ENCODE measurements at regions of chr9 and their contacts with region 1.

Region 1: GRCh38 chr9:96449845-96450612 is at the start of gene HABP4:
- DNase-seq: peak; percentile 97 to 99 (median 98)
- ATAC-seq: peak; percentile 99 to 100 (median 99)
- H3K4me3 ChIP-seq: peak within 1 kb of the TSS; percentile 53 to 95 (median 82)
- H3K27ac ChIP-seq: peak within 1 kb of the TSS; percentile 52 to 93 (median 82)
- H3K4me1 ChIP-seq: peaks cover 0 to 30% (median 13%) of the 10 kb centered on the region in 12 donors
- H3K27me3 ChIP-seq: peaks cover 0 to 8% (median 0%) of the 10 kb centered on the region in 9 donors
- CTCF ChIP-seq: peak in 5 of 12 donors; percentile 7 to 36 (median 14)
- POLR2A ChIP-seq: peak; percentile 82 to 92
- total RNA-seq, gene HABP4: 17.8 to 35.7 (median 25.9) TPM

Region 2: DNA sequence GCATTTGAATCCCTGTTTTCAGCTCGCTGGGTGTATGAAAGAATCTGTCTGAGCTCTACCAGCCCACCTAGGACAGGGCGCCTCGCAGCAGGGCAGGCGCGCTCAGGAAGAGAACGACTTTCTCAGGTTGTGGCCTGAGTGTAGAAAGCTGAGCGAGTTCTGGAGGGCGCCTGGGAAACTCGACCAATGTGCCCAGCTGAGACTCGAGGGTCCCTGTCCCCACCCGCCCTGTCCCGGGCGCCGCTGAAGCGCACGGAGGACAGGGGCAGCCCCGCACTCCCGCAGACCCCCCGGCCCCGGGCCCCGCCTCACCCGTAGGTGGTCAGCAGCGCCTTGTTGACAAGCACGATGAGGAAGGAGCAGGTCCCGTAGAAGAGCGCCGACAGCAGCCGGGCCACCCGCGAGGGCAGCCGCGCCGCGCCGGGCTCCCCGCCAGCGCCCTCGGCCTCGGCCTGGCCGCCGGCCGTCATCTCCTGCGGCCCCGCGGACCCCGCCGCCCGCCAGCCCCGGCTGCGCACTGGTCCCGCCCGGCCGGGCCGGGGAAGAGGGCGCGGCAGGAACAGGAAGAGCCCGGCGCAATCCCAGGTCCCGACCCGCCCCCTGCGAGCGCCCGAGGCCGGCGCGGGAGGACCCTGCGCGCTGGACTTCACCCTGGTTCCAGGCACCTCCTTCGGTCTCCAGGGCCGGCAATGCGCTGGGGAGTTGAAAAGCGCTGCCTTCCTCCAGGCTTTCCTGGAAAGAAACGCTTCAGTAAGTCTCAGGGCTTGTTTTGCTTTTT is 66.7 kb before region 1 on chr9 and contains the start of gene SLC35D2:
- intact Hi-C with region 1: loop called in 1 of 10 experiments (anchors 5 kb)
- DNase-seq: peak; percentile 75 to 84 (median 76)
- ATAC-seq: peak; percentile 91 to 97 (median 96)
- H3K4me3 ChIP-seq: peak within 1 kb of the TSS; percentile 47 to 98 (median 72)
- H3K27ac ChIP-seq: peak within 1 kb of the TSS; percentile 76 to 92 (median 87)
- H3K4me1 ChIP-seq: peaks cover 0 to 30% (median 12%) of the 10 kb centered on the region in 12 donors
- H3K27me3 ChIP-seq: no peaks in the 10 kb centered on the region
- CTCF ChIP-seq: no peak
- POLR2A ChIP-seq: peak in 1 of 2 donors; percentile 39
- total RNA-seq, gene SLC35D2: 10.5 to 23.1 (median 15.9) TPM

Region 3: DNA sequence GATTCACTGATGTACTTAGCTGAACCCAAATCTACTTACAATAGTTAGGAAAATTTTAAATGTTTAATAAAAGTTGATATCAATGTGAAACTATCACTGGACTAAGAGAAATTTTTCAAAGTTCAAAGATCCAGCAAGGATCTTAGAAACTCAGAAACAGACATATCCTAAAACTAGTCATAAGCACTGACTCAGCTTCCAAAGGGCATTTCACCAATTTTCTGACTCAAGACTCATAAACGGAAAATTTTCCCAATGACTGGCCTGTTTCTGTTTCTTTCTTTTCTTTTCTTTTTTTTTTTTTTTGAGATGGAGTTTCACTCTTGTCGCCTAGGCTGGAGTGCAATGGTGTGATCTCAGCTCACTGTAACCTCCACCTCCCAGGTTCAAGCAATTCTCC is 103.0 kb after region 1 on chr9:
- intact Hi-C with region 1: loop called in 1 of 10 experiments (anchors 5 kb)
- DNase-seq: no peak
- ATAC-seq: no peak
- H3K4me3 ChIP-seq: no peak overlapping the region
- H3K27ac ChIP-seq: peak overlapping the region in 6 of 12 donors; percentile 7 to 84 (median 70)
- H3K4me1 ChIP-seq: peaks cover 0 to 54% (median 40%) of the 10 kb centered on the region in 12 donors
- H3K27me3 ChIP-seq: no peaks in the 10 kb centered on the region
- CTCF ChIP-seq: no peak
- POLR2A ChIP-seq: no peak

Region 4: GRCh38 chr9:96619491-96620154 is 169.6 kb after region 1 on chr9 and contains the start of gene CDC14B:
- intact Hi-C with region 1: loop called in 5 of 10 experiments (anchors 2 to 10 kb)
- DNase-seq: peak; percentile 87 to 96 (median 92)
- ATAC-seq: peak; percentile 50 to 82 (median 78)
- H3K4me3 ChIP-seq: peak within 1 kb of the TSS; percentile 58 to 89 (median 78)
- H3K27ac ChIP-seq: peak within 1 kb of the TSS; percentile 72 to 92 (median 88)
- H3K4me1 ChIP-seq: peaks cover 0 to 12% (median 2%) of the 10 kb centered on the region in 12 donors
- H3K27me3 ChIP-seq: peaks cover 0 to 14% (median 0%) of the 10 kb centered on the region in 9 donors
- CTCF ChIP-seq: peak in 2 of 12 donors; percentile 21 to 28
- POLR2A ChIP-seq: peak in 1 of 2 donors; percentile 16
- total RNA-seq, gene CDC14B: 18.8 to 37.0 (median 26.9) TPM

Region 5: DNA sequence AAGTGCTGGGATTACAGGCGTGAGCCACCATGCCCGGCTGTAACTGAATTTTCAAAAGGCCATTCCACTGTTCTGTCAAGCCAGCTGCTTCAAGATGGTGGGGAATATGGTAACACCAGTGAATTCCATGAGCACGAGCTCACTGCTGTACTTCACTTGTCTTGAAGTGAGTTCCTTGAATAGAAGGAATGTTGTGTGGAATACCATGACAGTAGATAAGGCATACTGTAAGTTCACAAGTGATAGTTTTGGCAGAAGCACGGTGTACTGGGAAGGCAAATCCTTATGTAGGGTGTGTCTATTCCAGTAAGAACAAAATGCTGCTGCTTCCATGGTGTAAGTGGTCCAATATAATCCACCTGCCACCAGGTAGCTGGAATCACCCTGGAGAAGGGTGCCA is 211.7 kb after region 1 on chr9:
- intact Hi-C with region 1: loop called in 5 of 10 experiments (anchors 5 to 10 kb)
- DNase-seq: no peak
- ATAC-seq: no peak
- H3K4me3 ChIP-seq: no peak overlapping the region
- H3K27ac ChIP-seq: no peak overlapping the region
- H3K4me1 ChIP-seq: peaks cover 0 to 7% (median 0%) of the 10 kb centered on the region in 12 donors
- H3K27me3 ChIP-seq: no peaks in the 10 kb centered on the region
- CTCF ChIP-seq: no peak
- POLR2A ChIP-seq: no peak

Measured in heart left ventricle (tissue), 16 donors.